Head of caudate nucleus (tissue), 42 donors: ENCODE measurements at regions of chr16 and their contacts with region 1.

Region 1: GRCh38 chr16:106623-107324 is 28.7 kb downstream of the MPG start:
- DNase-seq: peak in 39 of 42 donors; percentile 41 to 87 (median 73)

Region 2: GRCh38 chr16:180938-181667 is 74.3 kb after region 1 on chr16:
- intact Hi-C with region 1: loop called (anchors 2 kb)
- DNase-seq: peak; percentile 48 to 88 (median 76)